ENCODE measurements at regions of chr14 and their contacts with region 1.

Region 1: GRCh38 chr14:89040460-89041259 is 216.2 kb downstream of the TTC8 start:
- DNase-seq: peak; percentile 87 to 90
- ATAC-seq: peak; percentile 86 to 99 (median 95)
- H3K4me3 ChIP-seq: peak overlapping the region in 9 of 10 donors; percentile 24 to 60 (median 51)
- H3K27ac ChIP-seq: peak overlapping the region; percentile 67 to 84 (median 78)
- H3K4me1 ChIP-seq: peaks cover 0 to 16% (median 11%) of the 10 kb centered on the region in 9 donors
- H3K27me3 ChIP-seq: peaks cover 0 to 6% (median 0%) of the 10 kb centered on the region in 7 donors
- CTCF ChIP-seq: peak; percentile 80 to 99 (median 95)

Region 2: GRCh38 chr14:89000007-89000942 is 40.4 kb before region 1 on chr14:
- intact Hi-C with region 1: no loop called
- DNase-seq: peak in 1 of 2 donors; percentile 14
- ATAC-seq: peak in 3 of 8 donors; percentile 24 to 96 (median 70)
- H3K4me3 ChIP-seq: no peak overlapping the region
- H3K27ac ChIP-seq: peak overlapping the region in 1 of 10 donors; percentile 16
- H3K4me1 ChIP-seq: peaks cover 0 to 12% (median 0%) of the 10 kb centered on the region in 9 donors
- H3K27me3 ChIP-seq: peaks cover 0 to 4% (median 0%) of the 10 kb centered on the region in 7 donors
- CTCF ChIP-seq: no peak

Region 3: DNA sequence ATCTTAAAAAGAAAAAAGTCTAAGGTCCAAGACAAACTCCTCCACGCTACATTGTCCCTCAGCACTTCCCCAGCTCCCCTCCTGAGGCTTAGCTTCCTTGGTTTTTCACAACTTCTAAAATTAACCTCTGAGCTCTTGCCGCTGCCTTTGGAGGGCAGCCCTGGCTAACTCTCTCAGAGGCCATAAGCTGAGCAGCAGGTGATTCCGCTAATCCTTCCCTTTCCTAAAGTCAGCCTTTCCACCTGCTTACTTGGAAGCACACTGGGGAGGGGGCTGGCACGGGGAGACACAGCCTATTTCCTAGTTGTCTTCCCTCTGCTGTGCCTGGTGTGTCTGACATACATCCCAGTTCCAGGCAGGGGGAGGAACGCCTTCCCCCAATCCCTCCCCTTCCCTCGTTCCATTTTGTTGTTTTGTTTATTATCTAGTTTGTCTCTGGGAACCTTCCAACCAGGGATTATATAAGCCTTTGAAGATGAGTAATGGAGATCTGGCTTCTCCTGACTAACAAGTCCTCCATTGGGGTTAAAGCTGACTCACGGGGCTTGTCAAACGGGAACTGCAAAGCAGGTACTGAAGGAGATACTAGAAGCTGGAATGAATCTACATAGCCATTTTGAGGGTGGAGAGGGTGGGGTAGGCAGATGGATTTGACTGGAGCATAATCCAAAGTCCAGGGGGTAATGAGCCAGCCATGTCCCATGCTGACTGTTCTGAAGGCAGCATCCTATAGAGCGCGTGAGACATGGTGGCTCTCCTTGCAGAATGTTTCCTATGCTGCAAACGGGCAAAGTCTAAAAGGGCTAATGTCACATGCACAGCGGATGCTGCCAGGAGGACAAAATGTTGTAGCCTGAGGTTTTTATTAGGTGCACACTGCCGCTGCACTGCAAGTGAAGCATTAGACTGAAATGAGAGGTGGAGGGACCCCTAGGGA is 145.5 kb after region 1 on chr14:
- intact Hi-C with region 1: loop called in 1 of 10 experiments (anchors 5 kb)
- DNase-seq: no peak
- ATAC-seq: peak; percentile 43 to 84 (median 72)
- H3K4me3 ChIP-seq: no peak overlapping the region
- H3K27ac ChIP-seq: peak overlapping the region in 9 of 10 donors; percentile 11 to 77 (median 66)
- H3K4me1 ChIP-seq: peaks cover 10 to 48% (median 40%) of the 10 kb centered on the region in 9 donors
- H3K27me3 ChIP-seq: no peaks in the 10 kb centered on the region
- CTCF ChIP-seq: peak in 3 of 9 donors; percentile 24 to 29 (median 26)

Region 4: DNA sequence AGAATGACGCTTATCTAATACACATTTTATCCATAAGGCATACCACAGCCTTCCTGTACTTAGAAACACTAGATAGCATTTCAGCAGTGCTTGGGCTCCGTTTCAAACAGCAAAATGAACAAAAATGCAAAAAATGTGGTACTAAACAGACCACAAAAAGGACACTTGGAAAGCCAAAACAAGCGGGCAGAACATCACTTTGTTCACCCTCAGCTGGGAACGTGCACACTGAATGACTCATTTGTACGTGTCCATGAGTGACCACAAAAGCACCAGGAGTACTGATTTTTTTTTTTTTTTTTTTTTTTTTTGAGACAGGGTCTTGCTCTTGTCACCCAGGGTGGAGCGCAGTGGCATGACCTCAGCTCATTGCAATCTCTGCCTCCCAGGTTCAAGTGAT is 385.3 kb after region 1 on chr14:
- intact Hi-C with region 1: loop called in 2 of 10 experiments (anchors 5 to 10 kb)
- DNase-seq: no peak
- ATAC-seq: peak in 1 of 8 donors; percentile 22
- H3K4me3 ChIP-seq: no peak overlapping the region
- H3K27ac ChIP-seq: peak overlapping the region in 1 of 10 donors; percentile 13
- H3K4me1 ChIP-seq: peaks cover 8 to 65% (median 49%) of the 10 kb centered on the region in 9 donors
- H3K27me3 ChIP-seq: no peaks in the 10 kb centered on the region
- CTCF ChIP-seq: no peak

Region 5: GRCh38 chr14:89767861-89768268 is 727.2 kb after region 1 on chr14:
- intact Hi-C with region 1: loop called in 7 of 10 experiments (anchors 2 to 10 kb)
- DNase-seq: peak in 1 of 2 donors; percentile 49
- ATAC-seq: peak in 6 of 8 donors; percentile 58 to 74 (median 66)
- H3K4me3 ChIP-seq: no peak overlapping the region
- H3K27ac ChIP-seq: no peak overlapping the region
- H3K4me1 ChIP-seq: peaks cover 0 to 25% (median 0%) of the 10 kb centered on the region in 9 donors
- H3K27me3 ChIP-seq: no peaks in the 10 kb centered on the region
- CTCF ChIP-seq: peak; percentile 43 to 75 (median 60)

Region 6: GRCh38 chr14:89908712-89909450 is 868.2 kb after region 1 on chr14:
- intact Hi-C with region 1: loop called in 5 of 10 experiments (anchors 2 to 5 kb)
- DNase-seq: no peak
- ATAC-seq: no peak
- H3K4me3 ChIP-seq: no peak overlapping the region
- H3K27ac ChIP-seq: no peak overlapping the region
- H3K4me1 ChIP-seq: peaks cover 0 to 9% (median 0%) of the 10 kb centered on the region in 9 donors
- H3K27me3 ChIP-seq: no peaks in the 10 kb centered on the region
- CTCF ChIP-seq: no peak

Region 7: GRCh38 chr14:90126260-90126659 is 1085.6 kb after region 1 on chr14:
- intact Hi-C with region 1: no loop called
- DNase-seq: no peak
- ATAC-seq: no peak
- H3K4me3 ChIP-seq: no peak overlapping the region
- H3K27ac ChIP-seq: no peak overlapping the region
- H3K4me1 ChIP-seq: no peaks in the 10 kb centered on the region
- H3K27me3 ChIP-seq: peaks cover 0 to 7% (median 3%) of the 10 kb centered on the region in 7 donors
- CTCF ChIP-seq: no peak